ENCODE measurements at regions of chr6 and their contacts with region 1.

Region 1: DNA sequence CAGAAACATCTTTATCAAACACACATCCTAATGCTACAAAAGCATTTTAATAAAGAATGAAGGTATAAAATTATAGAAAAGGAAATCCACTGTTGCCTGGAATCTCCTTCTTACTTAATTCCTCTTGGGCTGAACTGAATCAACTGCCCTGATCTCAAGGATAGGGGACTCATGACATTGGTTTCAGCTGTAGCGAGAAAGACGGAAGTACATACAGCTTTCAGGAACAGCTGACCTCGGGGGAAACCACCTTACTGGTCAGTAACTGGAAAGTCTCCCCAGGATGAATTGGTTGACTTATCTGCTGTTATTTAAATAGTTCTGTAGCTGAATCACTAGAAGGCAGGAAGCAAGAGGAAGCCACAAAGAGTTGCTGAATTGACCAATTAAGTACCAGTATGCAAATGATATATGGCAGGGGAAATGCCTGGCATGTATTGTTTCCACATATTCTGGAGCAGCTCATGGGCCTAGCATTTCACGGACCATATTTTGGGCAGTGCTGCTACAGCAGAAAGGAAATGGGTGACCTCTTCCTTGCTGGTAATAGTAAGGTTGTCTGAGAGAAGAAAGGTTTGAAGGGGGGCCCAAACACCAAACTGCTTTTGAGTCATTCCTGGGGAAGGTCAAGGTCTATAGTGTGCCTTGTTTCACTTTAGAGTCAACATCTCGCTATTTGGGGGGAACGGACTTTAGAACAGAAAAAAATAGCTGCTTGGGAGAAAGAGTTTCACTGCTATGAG is 43.7 kb upstream of the MAP7 start:
- DNase-seq: peak; percentile 97
- H3K4me3 ChIP-seq: no peak overlapping the region
- H3K27me3 ChIP-seq: no peaks in the 10 kb centered on the region
- CTCF ChIP-seq: no peak

Region 2: GRCh38 chr6:136471372-136471771 is 122.5 kb before region 1 on chr6:
- CTCF ChIA-PET with region 1: no interaction called
- POLR2A ChIA-PET with region 1: no interaction called
- DNase-seq: no peak
- H3K4me3 ChIP-seq: no peak overlapping the region
- H3K27me3 ChIP-seq: no peaks in the 10 kb centered on the region
- CTCF ChIP-seq: no peak

Region 3: DNA sequence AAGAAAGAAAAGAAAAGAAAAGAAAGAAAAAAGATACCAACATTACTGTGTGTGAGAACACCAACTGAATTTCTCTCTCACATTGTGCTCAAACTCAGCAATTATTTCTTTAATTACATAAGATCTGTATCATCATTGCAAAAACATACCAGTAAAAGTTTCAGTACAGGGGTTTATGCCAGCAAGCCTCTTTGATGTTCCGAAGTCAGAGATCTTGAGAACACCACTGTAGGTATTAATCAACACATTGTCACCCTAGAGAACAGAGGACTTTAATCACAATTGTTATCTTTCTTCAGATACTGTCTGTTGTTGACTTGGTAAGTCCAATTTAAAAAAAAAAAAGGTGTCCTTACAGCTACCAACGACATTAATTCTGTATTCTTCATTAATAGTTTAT is 17.2 kb after region 1 on chr6:
- CTCF ChIA-PET with region 1: no interaction called
- POLR2A ChIA-PET with region 1: interaction called, 10 read pairs
- DNase-seq: no peak
- H3K4me3 ChIP-seq: no peak overlapping the region
- H3K27me3 ChIP-seq: no peaks in the 10 kb centered on the region
- CTCF ChIP-seq: no peak

Region 4: DNA sequence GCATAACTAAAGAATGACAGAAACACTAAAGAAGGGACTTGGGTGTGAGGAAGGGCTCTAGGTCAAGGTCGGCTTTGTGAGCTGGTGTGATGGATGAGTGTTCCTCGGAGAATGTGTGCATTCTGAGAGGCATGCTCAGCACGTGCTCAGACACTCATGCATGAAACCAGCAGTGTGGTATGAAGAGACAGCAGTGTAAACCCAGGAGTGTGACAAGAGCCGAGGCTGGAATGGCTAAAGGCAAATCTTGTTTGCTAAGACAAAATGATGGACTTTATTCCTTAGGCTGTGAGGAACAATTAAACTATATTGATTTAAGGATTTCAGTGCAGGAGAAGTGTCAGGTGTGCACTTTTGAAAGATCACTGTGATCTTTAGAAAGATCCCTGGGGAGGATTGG is 63.7 kb after region 1 on chr6:
- CTCF ChIA-PET with region 1: no interaction called
- POLR2A ChIA-PET with region 1: no interaction called
- DNase-seq: no peak
- H3K4me3 ChIP-seq: no peak overlapping the region
- H3K27me3 ChIP-seq: no peaks in the 10 kb centered on the region
- CTCF ChIP-seq: no peak

Region 5: GRCh38 chr6:136696238-136696637 is 102.3 kb after region 1 on chr6:
- CTCF ChIA-PET with region 1: no interaction called
- POLR2A ChIA-PET with region 1: no interaction called
- DNase-seq: no peak
- H3K4me3 ChIP-seq: no peak overlapping the region
- H3K27me3 ChIP-seq: no peaks in the 10 kb centered on the region
- CTCF ChIP-seq: no peak

Measured in BJ (cell line).